ENCODE measurements at regions of chr12 and their contacts with region 1.

Region 1: GRCh38 chr12:751192-751998 is 984 bp upstream of the WNK1 start:
- DNase-seq: peak; percentile 94
- H3K4me3 Mint-ChIP-seq: no peak overlapping the region
- H3K27ac Mint-ChIP-seq: no peak overlapping the region
- H3K4me1 Mint-ChIP-seq: peaks cover 16% of the 10 kb centered on the region
- H3K27me3 Mint-ChIP-seq: no peaks in the 10 kb centered on the region

Region 2: DNA sequence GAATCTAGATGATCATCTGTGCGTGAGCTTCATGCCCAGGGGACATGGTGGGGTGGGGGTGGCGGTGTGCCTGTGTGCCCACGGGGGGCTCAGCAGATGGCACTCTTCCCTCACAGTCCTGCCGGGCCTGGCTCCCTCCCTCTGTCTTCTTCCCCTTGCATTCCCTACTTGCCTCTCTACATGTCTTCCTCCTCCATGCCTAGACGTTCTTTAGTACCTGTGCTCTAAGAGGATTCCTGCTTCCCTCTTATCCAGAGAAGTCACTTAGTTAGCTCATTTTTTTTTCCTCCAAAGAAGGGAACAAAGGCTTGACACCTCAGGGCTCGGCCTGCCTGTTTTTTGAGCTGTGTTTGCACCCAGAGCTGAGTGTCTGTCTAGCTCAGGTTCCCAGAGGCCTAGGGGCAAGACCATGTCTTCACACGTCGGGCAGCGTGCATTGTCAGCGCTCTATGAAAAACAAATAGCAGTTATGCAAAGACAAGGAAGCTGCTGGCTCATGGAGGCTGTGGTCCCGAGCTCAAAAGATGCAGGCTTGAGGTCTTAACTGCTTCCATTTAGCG is 136.9 kb before region 1 on chr12:
- CTCF ChIA-PET with region 1: interaction called, 45 read pairs
- POLR2A ChIA-PET with region 1: interaction called, 7 read pairs
- intact Hi-C with region 1: no loop called
- DNase-seq: peak; percentile 59
- H3K4me3 Mint-ChIP-seq: no peak overlapping the region
- H3K27ac Mint-ChIP-seq: no peak overlapping the region
- H3K4me1 Mint-ChIP-seq: peaks cover 18% of the 10 kb centered on the region
- H3K27me3 Mint-ChIP-seq: no peaks in the 10 kb centered on the region

Region 3: GRCh38 chr12:662566-663292 is 88.7 kb before region 1 on chr12:
- CTCF ChIA-PET with region 1: interaction called, 69 read pairs
- POLR2A ChIA-PET with region 1: interaction called, 31 read pairs
- intact Hi-C with region 1: loop called (anchors 2 kb)
- DNase-seq: peak; percentile 4
- H3K4me3 Mint-ChIP-seq: peak overlapping the region; percentile 52
- H3K27ac Mint-ChIP-seq: peak overlapping the region; percentile 65
- H3K4me1 Mint-ChIP-seq: peaks cover 50% of the 10 kb centered on the region
- H3K27me3 Mint-ChIP-seq: no peaks in the 10 kb centered on the region

Region 4: DNA sequence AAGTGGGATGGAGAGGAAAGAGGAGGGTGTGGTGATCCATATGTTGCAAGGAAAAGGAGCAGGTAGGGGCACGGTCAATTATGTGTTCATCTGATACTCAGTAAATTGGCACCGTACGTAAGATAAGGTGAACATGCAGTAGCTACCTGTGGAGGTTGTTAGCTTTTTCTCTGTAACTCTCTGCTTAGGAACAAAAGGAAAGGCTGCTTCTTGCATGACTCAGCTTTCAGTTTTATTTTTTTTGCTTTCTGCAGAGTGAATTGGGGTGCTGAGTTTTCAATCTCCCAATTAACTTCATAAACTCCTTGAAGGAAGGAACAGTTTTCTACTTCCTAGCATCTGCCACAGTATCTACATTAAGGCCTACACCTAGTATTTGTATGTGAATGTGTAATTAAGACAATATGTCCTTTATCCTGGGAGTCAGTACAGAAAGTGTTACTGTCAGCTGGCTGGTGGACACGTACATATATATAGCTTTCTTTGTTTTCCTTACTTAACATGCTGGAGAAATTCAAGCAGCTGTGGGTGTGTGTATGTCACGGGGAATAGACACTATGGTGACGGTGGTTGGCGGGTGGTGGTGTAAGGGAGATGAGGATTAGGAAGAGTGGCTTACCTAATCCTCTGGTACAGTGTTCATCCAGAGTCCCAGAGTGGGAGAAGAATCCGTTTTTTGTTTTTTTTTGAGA is 39.1 kb before region 1 on chr12:
- CTCF ChIA-PET with region 1: interaction called, 13 read pairs
- POLR2A ChIA-PET with region 1: no interaction called
- intact Hi-C with region 1: no loop called
- DNase-seq: no peak
- H3K4me3 Mint-ChIP-seq: no peak overlapping the region
- H3K27ac Mint-ChIP-seq: no peak overlapping the region
- H3K4me1 Mint-ChIP-seq: peaks cover 27% of the 10 kb centered on the region
- H3K27me3 Mint-ChIP-seq: no peaks in the 10 kb centered on the region

Region 5: DNA sequence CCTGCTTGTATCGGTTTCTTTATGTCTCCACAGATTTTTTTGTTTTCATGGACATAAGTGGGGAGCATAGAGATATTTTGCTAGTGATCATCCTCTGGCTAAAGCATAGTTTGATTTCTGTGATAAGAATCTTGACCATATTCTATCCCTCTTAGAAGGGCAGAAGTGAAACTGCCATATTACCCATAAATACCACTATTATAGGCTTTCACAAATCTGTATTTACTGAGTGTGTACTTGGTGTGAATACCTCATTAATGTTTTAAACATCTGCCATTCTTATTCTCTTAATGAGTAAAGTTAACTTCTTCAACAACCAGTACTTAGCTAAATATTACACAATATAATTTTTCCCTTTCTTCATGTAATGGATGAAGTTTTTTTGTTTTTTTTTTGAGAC is 17.0 kb after region 1 on chr12:
- CTCF ChIA-PET with region 1: interaction called, 6 read pairs
- POLR2A ChIA-PET with region 1: no interaction called
- intact Hi-C with region 1: loop called (anchors 2 kb)
- DNase-seq: no peak
- H3K4me3 Mint-ChIP-seq: no peak overlapping the region
- H3K27ac Mint-ChIP-seq: no peak overlapping the region
- H3K4me1 Mint-ChIP-seq: peaks cover 64% of the 10 kb centered on the region
- H3K27me3 Mint-ChIP-seq: no peaks in the 10 kb centered on the region

Region 6: DNA sequence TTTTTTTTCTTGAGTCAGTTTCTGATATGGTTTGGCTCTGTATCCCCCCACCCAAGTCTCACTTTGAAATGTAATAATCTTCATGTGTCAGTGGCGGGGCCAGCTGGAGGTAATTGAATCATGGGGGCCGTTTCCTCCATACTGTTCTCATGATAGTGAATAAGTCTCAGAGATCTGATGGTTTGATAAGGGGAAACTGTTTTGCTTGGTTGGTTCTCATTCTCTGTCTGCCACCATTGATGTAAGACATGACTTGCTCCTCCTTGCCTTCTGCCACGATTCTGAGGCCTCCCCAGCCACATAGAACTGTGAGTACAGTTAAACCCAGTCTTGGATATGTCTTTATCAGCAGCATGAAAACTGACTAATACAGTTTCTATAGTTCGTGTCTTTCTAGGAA is 43.9 kb after region 1 on chr12:
- CTCF ChIA-PET with region 1: interaction called, 19 read pairs
- POLR2A ChIA-PET with region 1: interaction called, 17 read pairs
- intact Hi-C with region 1: loop called (anchors 1 kb)
- DNase-seq: peak; percentile 85
- H3K4me3 Mint-ChIP-seq: peak overlapping the region; percentile 35
- H3K27ac Mint-ChIP-seq: peak overlapping the region; percentile 79
- H3K4me1 Mint-ChIP-seq: peaks cover 81% of the 10 kb centered on the region
- H3K27me3 Mint-ChIP-seq: no peaks in the 10 kb centered on the region

Region 7: GRCh38 chr12:1594261-1595025 is 843.0 kb after region 1 on chr12 and contains the start of gene FBXL14:
- CTCF ChIA-PET with region 1: no interaction called
- POLR2A ChIA-PET with region 1: interaction called, 3 read pairs
- intact Hi-C with region 1: loop called (anchors 5 kb)
- DNase-seq: peak; percentile 91
- H3K4me3 Mint-ChIP-seq: peak within 1 kb of the TSS; percentile 94
- H3K27ac Mint-ChIP-seq: peak within 1 kb of the TSS; percentile 91
- H3K4me1 Mint-ChIP-seq: peaks cover 31% of the 10 kb centered on the region
- H3K27me3 Mint-ChIP-seq: no peaks in the 10 kb centered on the region
- total RNA-seq, gene FBXL14: 13.5 to 14.4 TPM

Measured in activated CD4-positive, alpha-beta memory T cell treated with anti-CD3 and anti-CD28 coated beads for 36 hours (primary cell).